GM10248 (cell line): ENCODE measurements at regions of chr4 and their contacts with region 1.

Region 1: GRCh38 chr4:147866532-147867271 is 134.8 kb downstream of the ARHGAP10 start:
- DNase-seq: peak; percentile 80
- CTCF ChIP-seq: peak; percentile 97

Region 2: DNA sequence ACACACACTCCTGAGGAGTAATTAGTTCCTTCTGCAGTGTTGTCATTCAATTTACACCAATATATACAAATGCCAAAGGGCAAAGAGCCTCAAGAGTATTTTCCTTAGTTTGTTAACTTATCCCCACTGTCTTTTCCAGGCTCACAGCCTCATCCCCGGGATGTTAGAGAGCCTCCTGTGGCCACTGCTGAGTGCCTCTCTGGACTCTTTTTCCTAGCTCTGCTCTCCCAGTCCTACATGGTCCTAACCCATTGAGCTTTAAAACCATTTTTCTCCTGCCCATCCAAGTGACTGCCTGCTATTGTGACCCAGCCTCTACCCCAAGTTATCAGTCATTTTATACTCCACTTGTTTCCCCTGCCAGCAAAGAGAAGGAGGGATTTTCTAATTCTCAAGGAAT is 897.6 kb before region 1 on chr4:
- CTCF ChIA-PET with region 1: no interaction called
- POLR2A ChIA-PET with region 1: no interaction called
- DNase-seq: no peak
- CTCF ChIP-seq: no peak

Region 3: GRCh38 chr4:147160908-147161513 is 705.7 kb before region 1 on chr4:
- CTCF ChIA-PET with region 1: interaction called, 13 read pairs
- POLR2A ChIA-PET with region 1: no interaction called
- DNase-seq: peak; percentile 64
- CTCF ChIP-seq: peak; percentile 85

Region 4: DNA sequence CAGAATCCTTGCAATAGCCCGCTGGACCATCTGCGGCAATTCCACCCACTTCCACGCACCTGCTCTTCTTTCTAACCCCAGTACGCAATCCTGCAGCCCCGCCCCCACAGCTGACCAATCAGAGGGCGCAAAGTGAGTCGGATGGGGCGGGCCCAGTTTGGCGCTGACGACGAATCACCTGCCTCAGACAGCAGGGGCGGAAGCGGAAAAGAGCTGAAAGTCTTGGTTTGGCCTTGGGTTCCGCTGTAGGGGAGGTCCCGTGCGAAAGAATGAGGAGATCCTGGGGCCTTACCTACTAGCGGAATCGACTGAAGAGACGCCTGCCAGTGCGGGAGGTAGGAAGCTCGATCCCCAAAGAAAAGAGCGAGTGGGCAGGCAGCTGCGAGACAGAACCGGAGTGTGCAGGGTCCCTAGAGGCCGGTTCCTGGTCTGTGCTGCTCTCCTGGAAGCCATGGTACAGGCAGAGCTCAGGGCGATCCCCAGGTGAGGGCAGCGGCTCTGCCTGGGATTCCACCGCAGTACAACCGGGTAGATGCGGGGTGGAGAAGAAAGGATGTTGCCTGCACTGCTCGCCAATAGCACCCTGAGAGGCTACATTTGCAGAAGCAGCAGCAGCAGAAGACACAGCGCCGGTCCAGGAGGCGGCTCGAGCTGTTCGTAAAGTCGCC is 249.4 kb before region 1 on chr4 and contains the start of gene TMEM184C:
- CTCF ChIA-PET with region 1: interaction called, 47 read pairs
- POLR2A ChIA-PET with region 1: no interaction called
- DNase-seq: peak; percentile 93
- CTCF ChIP-seq: no peak

Region 5: GRCh38 chr4:147707865-147708672 is 158.6 kb before region 1 on chr4:
- CTCF ChIA-PET with region 1: interaction called, 135 read pairs
- POLR2A ChIA-PET with region 1: no interaction called
- DNase-seq: peak; percentile 52
- CTCF ChIP-seq: peak; percentile 70

Region 6: GRCh38 chr4:147768113-147768512 is 98.6 kb before region 1 on chr4:
- CTCF ChIA-PET with region 1: interaction called, 17 read pairs
- POLR2A ChIA-PET with region 1: no interaction called
- DNase-seq: no peak
- CTCF ChIP-seq: no peak

Region 7: DNA sequence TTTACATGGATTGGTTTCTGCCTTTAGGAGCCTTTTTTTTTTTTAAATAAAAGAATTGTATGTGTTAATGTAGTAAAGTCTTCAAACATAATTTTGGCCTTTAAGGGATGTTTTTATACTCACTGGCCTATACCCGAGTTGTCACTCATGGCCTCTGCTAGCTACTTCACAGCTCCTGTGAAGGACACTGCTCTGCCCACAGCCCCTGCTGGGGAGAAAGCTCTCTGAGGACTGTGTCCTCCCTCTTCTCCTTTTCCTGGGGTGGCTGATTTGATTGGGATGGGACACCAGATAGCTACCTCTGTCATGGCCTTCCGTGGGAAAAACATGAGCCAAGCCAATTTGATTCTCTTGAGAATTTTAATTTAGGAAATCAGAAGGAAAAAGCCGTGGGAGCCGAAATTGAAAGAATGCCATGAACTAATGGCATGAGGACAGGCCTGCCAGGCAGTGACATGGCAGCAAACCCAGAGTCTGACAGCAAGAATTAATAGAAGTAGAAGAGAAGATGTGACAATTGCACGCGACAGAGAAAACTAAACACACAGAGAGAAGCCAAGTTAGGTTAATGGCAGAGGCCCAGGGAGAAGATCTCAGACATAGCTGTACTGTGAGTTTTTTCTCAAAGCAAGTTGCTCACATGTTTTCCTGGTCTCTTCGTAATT is 53.5 kb before region 1 on chr4:
- CTCF ChIA-PET with region 1: interaction called, 14 read pairs
- POLR2A ChIA-PET with region 1: no interaction called
- DNase-seq: no peak
- CTCF ChIP-seq: no peak

Region 8: DNA sequence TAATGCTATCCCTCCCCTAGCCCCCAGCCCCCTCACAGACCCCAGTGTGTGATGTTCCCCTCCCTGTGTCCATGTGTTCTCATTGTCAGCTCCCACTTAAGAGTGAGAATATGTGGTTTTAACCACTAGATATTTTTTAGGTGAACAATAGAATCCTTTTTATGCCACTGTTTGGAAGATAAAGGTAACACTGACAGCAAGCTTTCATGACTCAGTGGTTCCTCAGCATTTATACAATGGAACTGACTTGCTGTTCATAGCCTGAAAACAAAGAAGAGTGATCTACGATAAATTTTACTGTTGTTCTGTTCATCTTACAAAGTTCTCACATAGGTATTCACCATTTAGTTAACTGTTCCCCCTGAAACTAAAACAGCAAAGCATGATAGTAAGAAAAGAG is 13.0 kb after region 1 on chr4:
- CTCF ChIA-PET with region 1: interaction called, 92 read pairs
- POLR2A ChIA-PET with region 1: no interaction called
- DNase-seq: no peak
- CTCF ChIP-seq: no peak

Region 9: GRCh38 chr4:147984065-147984777 is 117.5 kb after region 1 on chr4:
- CTCF ChIA-PET with region 1: no interaction called
- POLR2A ChIA-PET with region 1: no interaction called
- DNase-seq: peak; percentile 54
- CTCF ChIP-seq: peak; percentile 54

Region 10: DNA sequence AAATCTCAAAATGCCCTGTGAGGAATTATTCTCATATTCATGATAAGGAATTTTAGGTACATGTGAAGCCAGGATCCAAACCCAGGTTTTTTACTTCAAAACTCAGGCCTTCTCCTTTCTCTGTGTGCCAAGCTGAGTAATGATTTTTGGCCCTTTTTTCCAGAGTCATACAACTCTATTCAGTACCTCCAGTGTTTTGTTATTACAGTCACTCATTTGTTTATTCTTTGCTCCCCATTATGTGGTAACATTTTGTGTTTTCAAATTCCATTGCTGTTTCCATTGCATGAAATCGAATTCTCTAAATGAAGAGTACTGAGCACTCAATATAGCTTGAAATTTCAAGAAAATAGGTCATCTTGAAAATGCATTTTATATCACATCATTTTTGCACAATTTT is 260.1 kb after region 1 on chr4:
- CTCF ChIA-PET with region 1: no interaction called
- POLR2A ChIA-PET with region 1: no interaction called
- DNase-seq: no peak
- CTCF ChIP-seq: no peak

Region 11: GRCh38 chr4:148152871-148153625 is 286.3 kb after region 1 on chr4:
- CTCF ChIA-PET with region 1: no interaction called
- POLR2A ChIA-PET with region 1: no interaction called
- DNase-seq: no peak
- CTCF ChIP-seq: no peak